ENCODE measurements at regions of chr5 and their contacts with region 1.

Region 1: DNA sequence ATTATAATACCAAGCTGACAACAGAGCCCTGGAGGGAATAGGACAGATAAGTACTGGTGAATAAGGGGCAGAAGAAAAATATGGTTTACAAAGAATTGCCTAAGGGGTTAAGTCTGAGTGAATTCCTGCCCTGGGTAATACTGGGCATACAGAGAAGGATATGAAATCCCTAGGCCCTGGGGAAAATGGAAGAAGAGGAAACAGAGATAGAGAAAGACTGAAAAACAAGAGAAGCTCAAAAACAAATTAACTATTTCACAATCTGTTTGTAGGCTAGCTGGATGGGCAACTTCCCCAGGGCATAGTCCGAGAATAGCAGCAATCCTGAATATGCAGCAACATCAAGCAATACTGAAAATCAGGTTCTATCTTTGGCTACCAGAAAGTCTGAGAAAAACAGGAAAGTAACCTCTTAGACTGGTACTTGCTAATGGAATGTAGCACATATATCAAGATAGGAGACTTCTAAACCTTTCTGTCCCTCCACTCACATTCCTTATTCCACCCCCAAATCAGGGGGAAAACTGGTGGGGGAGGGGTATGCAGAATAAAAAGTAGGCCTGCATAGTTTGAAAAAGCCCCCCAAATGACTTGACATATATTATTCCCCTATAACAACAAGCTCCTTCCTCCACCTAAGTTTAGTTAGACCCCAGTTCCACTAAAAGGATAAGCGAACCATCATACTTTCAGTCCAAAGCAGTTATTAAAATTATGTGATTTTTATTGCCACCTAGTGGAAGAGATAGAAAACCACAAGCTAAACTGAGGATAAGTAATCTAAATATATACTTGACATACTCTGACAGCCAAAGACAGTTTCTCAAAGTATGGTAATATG is 20.6 kb downstream of the SLC38A9 start:
- DNase-seq: no peak
- H3K4me3 ChIP-seq: peak overlapping the region in 2 of 4 donors; percentile 2 to 8
- H3K27ac ChIP-seq: peak overlapping the region in 3 of 4 donors; percentile 43 to 71 (median 70)
- H3K4me1 ChIP-seq: peaks cover 0 to 29% (median 24%) of the 10 kb centered on the region in 4 donors
- H3K27me3 ChIP-seq: no peaks in the 10 kb centered on the region
- CTCF ChIP-seq: peak; percentile 57 to 67 (median 66)
- EP300 ChIP-seq: no peak
- POLR2A ChIP-seq: no peak

Region 2: DNA sequence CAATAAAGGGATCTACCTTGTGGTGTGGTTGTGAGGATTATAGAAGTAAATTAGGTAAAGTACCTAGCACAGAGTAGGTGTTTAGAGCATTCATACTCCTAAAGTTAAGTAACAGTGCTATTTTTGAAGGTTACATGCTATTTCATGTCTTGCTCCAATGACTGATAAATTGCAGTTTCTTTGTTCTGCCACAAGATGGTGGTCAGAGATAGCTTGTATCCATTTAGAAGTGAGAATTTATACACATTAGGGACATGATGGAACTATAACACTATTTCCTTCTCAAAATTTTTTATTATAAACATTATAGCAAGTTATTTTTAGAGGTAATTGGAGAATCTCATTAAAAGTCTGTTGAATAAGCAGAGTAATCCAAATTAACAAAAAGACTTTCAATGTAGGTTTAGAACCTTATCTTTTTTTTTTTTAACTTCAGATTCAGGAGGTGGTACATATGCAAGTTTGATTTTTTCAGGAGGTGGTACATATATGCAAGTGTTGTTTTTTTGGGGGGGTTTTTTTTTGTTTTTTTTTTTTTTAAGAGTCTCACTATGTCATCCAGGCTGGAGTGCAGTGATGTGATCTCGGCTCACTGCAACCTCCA is 366.6 kb before region 1 on chr5:
- intact Hi-C with region 1: loop called (anchors 5 kb)
- DNase-seq: no peak
- H3K4me3 ChIP-seq: no peak overlapping the region
- H3K27ac ChIP-seq: no peak overlapping the region
- H3K4me1 ChIP-seq: peaks cover 0 to 16% (median 3%) of the 10 kb centered on the region in 4 donors
- H3K27me3 ChIP-seq: no peaks in the 10 kb centered on the region
- CTCF ChIP-seq: peak; percentile 20 to 61 (median 48)
- EP300 ChIP-seq: no peak
- POLR2A ChIP-seq: no peak

Region 3: DNA sequence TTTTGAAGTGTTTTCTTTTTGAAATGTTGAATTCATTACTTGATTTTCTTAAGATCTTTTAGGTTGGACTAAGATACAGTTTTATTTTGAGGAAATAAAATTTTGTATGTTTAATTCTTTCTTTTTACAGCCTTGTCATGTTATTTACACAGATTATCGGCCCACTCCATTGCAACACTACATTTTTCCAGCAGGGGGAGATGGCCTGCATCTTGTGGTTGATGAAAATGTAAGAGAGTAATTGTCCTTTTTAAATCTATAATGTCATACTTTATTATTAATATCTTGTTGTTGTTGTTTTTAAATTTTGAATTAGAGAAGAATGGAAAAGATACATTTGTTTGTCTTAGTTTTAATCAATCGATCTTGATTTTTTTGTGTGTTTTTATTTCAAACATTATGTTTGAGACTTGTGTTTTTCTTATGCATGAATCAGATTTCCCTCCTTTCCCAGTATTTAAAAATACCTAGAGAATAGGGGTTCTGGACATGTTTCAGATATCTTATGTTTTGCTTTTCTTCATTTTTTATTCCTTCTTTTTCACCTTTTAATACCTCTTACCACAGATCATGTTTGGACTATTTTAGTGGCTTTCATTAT is 347.0 kb before region 1 on chr5:
- intact Hi-C with region 1: loop called (anchors 2 kb)
- DNase-seq: peak; percentile 69
- H3K4me3 ChIP-seq: no peak overlapping the region
- H3K27ac ChIP-seq: peak overlapping the region in 3 of 4 donors; percentile 13 to 36 (median 17)
- H3K4me1 ChIP-seq: peaks cover 0 to 26% (median 16%) of the 10 kb centered on the region in 4 donors
- H3K27me3 ChIP-seq: no peaks in the 10 kb centered on the region
- CTCF ChIP-seq: peak in 3 of 4 experiments; percentile 86 to 90 (median 88)
- EP300 ChIP-seq: no peak
- POLR2A ChIP-seq: no peak

Region 4: GRCh38 chr5:55407059-55407684 is 284.3 kb before region 1 on chr5:
- intact Hi-C with region 1: loop called (anchors 1 kb)
- DNase-seq: no peak
- H3K4me3 ChIP-seq: no peak overlapping the region
- H3K27ac ChIP-seq: no peak overlapping the region
- H3K4me1 ChIP-seq: peaks cover 0 to 7% (median 3%) of the 10 kb centered on the region in 4 donors
- H3K27me3 ChIP-seq: no peaks in the 10 kb centered on the region
- CTCF ChIP-seq: peak; percentile 59 to 78 (median 62)
- EP300 ChIP-seq: no peak
- POLR2A ChIP-seq: no peak

Region 5: GRCh38 chr5:55601204-55601618 is 90.3 kb before region 1 on chr5:
- intact Hi-C with region 1: loop called (anchors 5 kb)
- DNase-seq: peak; percentile 95
- H3K4me3 ChIP-seq: peak overlapping the region in 2 of 4 donors; percentile 19
- H3K27ac ChIP-seq: peak overlapping the region; percentile 76 to 93 (median 88)
- H3K4me1 ChIP-seq: peaks cover 0 to 80% (median 78%) of the 10 kb centered on the region in 4 donors
- H3K27me3 ChIP-seq: no peaks in the 10 kb centered on the region
- CTCF ChIP-seq: no peak
- EP300 ChIP-seq: peak in 3 of 4 donors; percentile 39 to 90 (median 63)
- POLR2A ChIP-seq: no peak

Region 6: DNA sequence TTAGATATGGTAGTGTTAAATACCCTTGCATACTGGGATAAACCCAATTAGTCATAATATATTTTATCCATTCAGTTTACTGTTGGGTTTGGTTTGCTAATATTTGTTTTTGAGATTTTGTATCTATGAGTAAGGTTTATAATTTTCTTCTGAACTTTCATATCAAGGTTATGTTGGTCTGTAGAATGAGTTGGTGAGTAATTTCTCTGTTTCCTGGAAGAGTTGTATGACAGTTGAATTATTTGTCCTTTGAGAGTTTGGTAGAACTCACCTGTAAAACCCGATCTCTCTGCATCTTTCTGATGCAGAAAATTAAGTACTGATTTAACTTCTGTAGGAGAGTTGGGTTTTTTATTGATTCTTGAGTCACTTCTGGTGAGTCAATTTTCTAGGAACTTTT is 66.7 kb after region 1 on chr5:
- intact Hi-C with region 1: no loop called
- DNase-seq: no peak
- H3K4me3 ChIP-seq: no peak overlapping the region
- H3K27ac ChIP-seq: no peak overlapping the region
- H3K4me1 ChIP-seq: no peaks in the 10 kb centered on the region
- H3K27me3 ChIP-seq: no peaks in the 10 kb centered on the region
- CTCF ChIP-seq: no peak
- EP300 ChIP-seq: no peak
- POLR2A ChIP-seq: no peak

Measured in sigmoid colon (tissue), 7 donors.